Activated naive CD8-positive, alpha-beta T cell treated with anti-CD3 and anti-CD28 coated beads, Interleukin-2, amount 10 ng/mL, durations not matched to agents 7 days and 5 days (primary cell): ENCODE measurements at regions of chr3 and their contacts with region 1.

Region 1: DNA sequence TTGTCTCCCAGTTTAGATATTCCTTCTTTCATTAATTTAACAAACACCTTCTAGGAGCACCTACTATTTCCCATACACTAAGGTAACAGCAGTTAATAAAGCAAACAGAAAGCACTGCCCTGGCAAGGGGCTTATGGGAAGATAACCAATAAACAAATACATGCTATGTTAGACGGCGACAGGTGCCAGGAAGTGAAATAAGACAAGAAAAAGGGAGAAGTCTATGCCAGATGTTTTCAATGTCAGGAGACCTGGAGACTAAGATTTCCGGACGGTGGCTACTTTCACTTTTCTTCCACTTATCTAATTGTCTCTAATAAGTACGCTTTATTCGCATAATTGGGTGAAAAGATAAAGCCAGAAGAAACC is 32.5 kb upstream of the ZNF445 start:
- DNase-seq: no peak
- ATAC-seq: peak; percentile 2
- H3K4me3 Mint-ChIP-seq: peak overlapping the region; percentile 98
- H3K27ac Mint-ChIP-seq: peak overlapping the region; percentile 96
- H3K4me1 Mint-ChIP-seq: peaks cover 23% of the 10 kb centered on the region
- H3K27me3 Mint-ChIP-seq: peaks cover 2% of the 10 kb centered on the region

Region 2: GRCh38 chr3:43838877-43839276 is 671.1 kb before region 1 on chr3:
- POLR2A ChIA-PET with region 1: no interaction called
- DNase-seq: no peak
- ATAC-seq: no peak
- H3K4me3 Mint-ChIP-seq: no peak overlapping the region
- H3K27ac Mint-ChIP-seq: no peak overlapping the region
- H3K4me1 Mint-ChIP-seq: peaks cover 3% of the 10 kb centered on the region
- H3K27me3 Mint-ChIP-seq: peaks cover 7% of the 10 kb centered on the region

Region 3: DNA sequence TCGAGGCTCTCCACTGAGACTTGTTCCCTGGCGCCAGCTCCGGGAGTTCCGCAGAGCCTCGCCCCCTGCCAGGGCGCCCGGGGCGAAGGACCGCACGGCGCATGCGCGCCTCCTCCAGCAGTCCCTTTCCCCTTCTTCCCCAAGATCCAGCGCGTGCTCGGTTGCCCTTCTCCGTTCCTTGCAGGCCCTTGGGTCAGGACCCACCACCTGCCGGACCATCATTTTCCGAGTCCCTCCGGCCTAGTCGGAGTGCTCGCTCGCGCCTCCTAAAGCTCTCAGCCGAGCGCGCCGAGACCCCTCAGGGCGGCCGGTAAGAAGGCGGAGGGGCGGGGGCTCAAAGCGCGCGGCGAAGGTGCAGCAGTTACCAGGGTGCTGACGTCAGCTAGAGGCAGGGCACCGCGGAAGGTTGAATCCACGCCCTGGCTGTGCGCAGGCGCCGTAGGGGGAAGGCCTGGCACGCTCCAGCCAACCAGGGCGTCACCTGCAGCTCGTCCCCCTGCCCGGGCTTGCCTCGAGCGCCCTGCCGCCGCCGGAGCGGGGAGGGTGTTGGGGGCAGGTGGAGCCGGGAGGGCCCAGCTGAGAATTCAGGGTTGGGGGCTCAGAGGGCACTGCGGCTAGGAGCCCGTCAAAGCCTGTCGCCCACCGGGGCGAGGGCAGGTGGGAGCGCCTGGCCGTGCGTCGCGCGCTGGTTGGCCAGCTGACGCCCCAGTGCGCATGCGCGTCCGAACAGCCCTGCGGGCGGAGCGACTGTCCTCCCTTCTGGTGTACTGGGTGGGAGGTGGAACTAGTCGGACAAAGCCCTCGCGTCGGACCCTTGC is 171.8 kb before region 1 on chr3 and contains the start of gene TCAIM:
- POLR2A ChIA-PET with region 1: interaction called, 27 read pairs
- DNase-seq: peak; percentile 98
- ATAC-seq: peak; percentile 98
- H3K4me3 Mint-ChIP-seq: peak within 1 kb of the TSS; percentile 97
- H3K27ac Mint-ChIP-seq: peak within 1 kb of the TSS; percentile 98
- H3K4me1 Mint-ChIP-seq: peaks cover 13% of the 10 kb centered on the region
- H3K27me3 Mint-ChIP-seq: peaks cover 7% of the 10 kb centered on the region
- total RNA-seq, gene TCAIM: 19.4 to 20.9 TPM

Region 4: DNA sequence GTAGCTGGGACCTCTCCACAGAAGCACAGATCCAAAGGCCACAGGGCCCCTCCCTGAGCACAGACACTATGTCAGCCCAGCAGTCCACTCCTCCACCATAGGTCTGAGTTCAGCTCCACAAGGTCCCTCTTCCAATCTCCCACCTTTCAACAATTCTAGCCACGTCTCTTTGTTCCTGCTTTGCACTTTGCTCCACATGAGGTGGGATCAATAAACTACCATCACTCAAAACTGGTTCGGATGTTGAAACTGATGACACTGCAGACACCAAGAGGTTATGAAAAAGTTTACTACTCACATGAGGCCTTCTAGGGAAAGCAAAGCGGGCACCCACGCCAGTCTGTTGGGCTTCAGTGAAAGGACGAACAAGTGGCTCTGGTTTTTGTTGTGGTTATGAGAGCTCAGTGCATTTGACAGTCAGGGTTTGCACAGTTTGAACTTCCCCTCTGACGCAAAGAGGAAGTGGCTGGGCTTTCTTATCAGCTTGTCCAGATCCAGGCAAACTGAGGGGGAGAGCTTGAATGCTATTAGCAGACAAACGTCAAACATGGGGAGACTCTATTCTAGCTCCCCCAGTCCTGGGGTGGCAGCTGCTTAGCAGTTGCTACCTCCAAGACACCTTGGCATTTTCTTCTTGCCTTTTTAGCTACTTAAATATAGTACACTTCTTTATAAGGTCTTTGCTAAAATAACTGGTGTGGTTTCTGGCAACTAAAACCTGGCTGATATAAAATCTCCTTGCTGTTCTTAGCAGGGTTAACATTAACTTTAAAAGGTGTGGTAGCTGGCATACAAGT is 70.3 kb before region 1 on chr3:
- POLR2A ChIA-PET with region 1: interaction called, 17 read pairs
- DNase-seq: peak; percentile 60
- ATAC-seq: peak; percentile 95
- H3K4me3 Mint-ChIP-seq: peak overlapping the region; percentile 78
- H3K27ac Mint-ChIP-seq: peak overlapping the region; percentile 95
- H3K4me1 Mint-ChIP-seq: peaks cover 34% of the 10 kb centered on the region
- H3K27me3 Mint-ChIP-seq: no peaks in the 10 kb centered on the region

Region 5: DNA sequence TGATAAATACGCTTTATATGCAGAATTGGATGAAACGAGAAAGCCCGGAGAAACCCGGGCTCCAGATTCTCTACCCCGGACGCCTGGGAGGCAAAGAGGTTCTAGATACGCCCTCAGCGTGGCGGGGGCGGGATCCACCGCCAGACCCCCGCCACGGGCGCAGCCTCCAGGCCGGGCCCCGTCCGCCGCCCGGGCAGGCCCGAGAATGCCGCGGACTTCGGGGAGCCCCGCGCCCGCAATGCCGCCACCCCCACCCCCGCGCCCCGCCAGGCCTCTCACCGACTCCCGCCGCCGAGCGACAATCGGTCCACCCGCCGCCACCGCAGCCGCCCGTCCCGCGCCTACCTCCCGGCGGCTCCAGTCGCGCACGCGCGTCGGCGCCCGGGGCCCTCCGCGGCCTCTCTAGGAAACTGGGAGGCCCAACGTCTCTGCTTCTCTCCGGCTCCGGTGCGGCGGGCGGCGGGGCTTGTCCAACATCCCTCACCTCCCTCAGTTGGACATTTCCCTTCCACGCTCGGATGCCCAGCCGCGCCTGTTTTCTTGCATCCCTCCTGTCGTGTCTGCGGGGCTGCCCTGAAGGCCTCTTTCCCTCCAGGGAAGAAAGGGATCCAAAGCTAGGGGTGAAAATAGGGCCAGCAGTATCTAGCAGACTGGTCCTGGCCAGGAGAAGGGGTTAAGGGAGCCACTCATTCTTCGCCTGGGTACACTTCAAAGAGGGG is 32.5 kb before region 1 on chr3 and contains the start of gene ZNF445:
- POLR2A ChIA-PET with region 1: interaction called, 12 read pairs
- DNase-seq: peak; percentile 86
- ATAC-seq: peak; percentile 91
- H3K4me3 Mint-ChIP-seq: peak within 1 kb of the TSS; percentile 98
- H3K27ac Mint-ChIP-seq: peak within 1 kb of the TSS; percentile 91
- H3K4me1 Mint-ChIP-seq: peaks cover 13% of the 10 kb centered on the region
- H3K27me3 Mint-ChIP-seq: peaks cover 4% of the 10 kb centered on the region
- total RNA-seq, gene ZNF445: 26.2 to 27.2 TPM

Region 6: DNA sequence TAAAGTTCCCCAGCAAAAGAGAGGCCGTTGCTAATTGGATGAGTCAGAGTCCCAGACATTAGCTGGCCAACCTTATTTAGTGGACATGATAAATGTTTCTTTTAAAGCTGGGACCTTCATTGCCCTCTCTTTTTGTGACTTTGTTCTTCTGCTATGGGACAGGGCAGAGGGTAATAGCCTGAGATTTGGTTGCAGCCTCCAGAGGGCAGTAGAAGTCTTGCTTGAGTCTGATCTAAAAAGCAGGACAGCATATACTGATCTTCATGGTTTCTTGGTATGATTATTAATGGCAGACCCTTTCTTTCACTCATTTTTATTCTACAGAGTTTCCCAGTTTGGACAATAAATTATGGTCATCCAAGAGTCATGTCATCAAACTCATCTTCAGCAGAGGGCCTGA is 19.9 kb after region 1 on chr3:
- POLR2A ChIA-PET with region 1: no interaction called
- DNase-seq: no peak
- ATAC-seq: no peak
- H3K4me3 Mint-ChIP-seq: no peak overlapping the region
- H3K27ac Mint-ChIP-seq: no peak overlapping the region
- H3K4me1 Mint-ChIP-seq: peaks cover 1% of the 10 kb centered on the region
- H3K27me3 Mint-ChIP-seq: peaks cover 11% of the 10 kb centered on the region

Region 7: DNA sequence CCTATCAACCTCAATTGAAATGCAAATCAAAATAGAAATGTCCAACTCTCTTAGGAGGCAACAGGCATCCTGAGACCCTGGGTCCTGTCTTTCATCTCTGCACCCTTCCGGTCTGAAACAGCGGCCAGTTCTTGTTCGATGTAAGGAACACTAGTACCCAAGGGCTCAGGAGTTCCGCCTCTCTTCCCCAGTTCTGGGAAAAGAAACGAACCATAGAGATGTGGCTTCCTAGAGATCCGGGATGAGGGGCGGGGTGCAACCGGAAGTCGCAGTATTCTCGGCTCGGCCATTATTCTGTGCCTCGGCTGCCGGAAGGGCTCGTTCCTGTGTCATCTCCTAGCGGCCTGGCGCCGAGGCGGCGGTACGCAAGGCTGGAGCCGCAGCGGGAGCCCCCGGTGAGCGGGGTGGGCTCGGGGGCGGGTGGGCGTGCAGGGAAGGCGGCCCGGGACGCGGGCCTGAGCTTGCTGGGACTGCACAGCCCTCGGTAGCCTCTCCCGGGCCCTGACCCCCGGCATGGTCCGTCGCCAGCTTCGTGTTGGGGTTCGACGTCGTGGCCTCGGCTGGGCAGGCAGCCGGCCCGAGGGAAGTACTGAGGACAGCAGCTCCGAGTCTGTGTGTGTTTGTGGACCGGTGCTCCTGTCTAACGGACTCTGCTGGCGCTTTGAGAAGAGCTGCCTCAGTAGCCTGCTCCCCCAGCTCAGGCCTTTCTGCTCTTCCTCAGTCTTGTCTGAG is 114.9 kb after region 1 on chr3 and contains the start of gene ZNF197:
- POLR2A ChIA-PET with region 1: interaction called, 10 read pairs
- DNase-seq: peak; percentile 74
- ATAC-seq: peak; percentile 94
- H3K4me3 Mint-ChIP-seq: peak within 1 kb of the TSS; percentile 89
- H3K27ac Mint-ChIP-seq: peak within 1 kb of the TSS; percentile 85
- H3K4me1 Mint-ChIP-seq: peaks cover 19% of the 10 kb centered on the region
- H3K27me3 Mint-ChIP-seq: no peaks in the 10 kb centered on the region
- total RNA-seq, gene ZNF197: 18.4 to 19.2 TPM